GM18951 (cell line): ENCODE measurements at regions of chr1 and their contacts with region 1.

Region 1: DNA sequence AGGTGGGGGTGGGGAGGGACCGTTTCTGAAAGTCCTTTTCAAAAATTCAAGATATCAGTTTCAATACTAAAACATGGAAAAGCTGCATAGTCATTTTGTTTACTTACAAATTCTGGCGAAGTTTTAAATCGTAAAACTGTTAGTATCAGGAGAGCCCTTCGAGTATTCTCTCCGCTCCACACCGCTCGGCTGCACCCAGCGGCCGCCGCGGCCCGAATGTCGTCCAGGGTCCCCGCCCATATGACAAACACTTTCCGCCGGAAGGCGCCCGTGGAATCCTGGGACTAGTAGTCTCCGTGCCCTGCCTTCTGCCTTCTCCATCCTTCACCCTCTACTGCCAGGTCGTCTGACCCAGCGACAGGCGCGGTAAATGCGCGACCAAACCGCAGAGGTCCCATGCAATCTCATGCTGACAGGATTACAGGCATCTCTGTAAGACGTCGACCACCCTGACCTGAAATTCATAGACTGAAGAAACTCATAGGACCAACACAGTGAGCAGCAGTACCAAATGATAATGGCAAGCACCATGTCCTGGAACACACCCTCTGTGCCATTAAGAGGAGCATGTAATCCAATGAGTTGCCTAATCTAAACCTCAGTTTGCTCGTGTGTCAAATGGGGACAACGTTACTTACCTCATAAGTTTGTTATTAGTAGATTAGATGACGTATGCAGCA is at the start of gene TOR1AIP2:
- POLR2A ChIP-seq: peak; percentile 97

Region 2: GRCh38 chr1:180057883-180058396 is 180.2 kb after region 1 on chr1:
- in situ Hi-C with region 1: no loop called
- POLR2A ChIP-seq: no peak

Region 3: GRCh38 chr1:180178511-180179161 is 300.9 kb after region 1 on chr1:
- in situ Hi-C with region 1: loop called (anchors 10 kb)
- POLR2A ChIP-seq: no peak